AG04450 (cell line): ENCODE measurements at regions of chr2 and their contacts with region 1.

Region 1: GRCh38 chr2:68282811-68283418 is 30.6 kb upstream of the PPP3R1 start:
- DNase-seq: no peak
- H3K4me3 ChIP-seq: no peak overlapping the region
- H3K27ac ChIP-seq: no peak overlapping the region
- H3K27me3 ChIP-seq: no peaks in the 10 kb centered on the region
- CTCF ChIP-seq: peak; percentile 88

Region 2: GRCh38 chr2:68127358-68128242 is 155.3 kb before region 1 on chr2:
- CTCF ChIA-PET with region 1: interaction called, 70 read pairs
- POLR2A ChIA-PET with region 1: no interaction called
- DNase-seq: no peak
- H3K4me3 ChIP-seq: no peak overlapping the region
- H3K27ac ChIP-seq: no peak overlapping the region
- H3K27me3 ChIP-seq: no peaks in the 10 kb centered on the region
- CTCF ChIP-seq: no peak

Region 3: DNA sequence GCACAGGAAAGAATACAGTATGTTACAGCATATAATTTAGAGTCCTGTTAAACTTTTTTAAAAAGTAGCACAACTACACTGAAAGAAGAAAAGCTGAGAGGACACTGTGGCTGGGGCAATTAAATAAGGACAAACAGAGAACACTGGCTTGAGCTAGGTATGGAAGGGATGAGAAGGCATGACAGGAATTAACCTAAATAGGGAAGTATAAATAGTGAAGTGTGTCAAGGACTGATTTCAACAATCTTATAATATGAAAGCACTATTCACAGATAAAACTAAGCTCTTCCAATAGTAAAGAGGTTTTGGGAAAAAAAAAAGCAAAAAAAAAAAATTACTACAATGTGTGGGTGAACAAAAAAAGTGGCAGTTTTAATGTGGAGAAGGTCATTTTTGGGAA is 76.1 kb before region 1 on chr2:
- CTCF ChIA-PET with region 1: no interaction called
- POLR2A ChIA-PET with region 1: no interaction called
- DNase-seq: no peak
- H3K4me3 ChIP-seq: no peak overlapping the region
- H3K27ac ChIP-seq: no peak overlapping the region
- H3K27me3 ChIP-seq: no peaks in the 10 kb centered on the region
- CTCF ChIP-seq: no peak

Region 4: DNA sequence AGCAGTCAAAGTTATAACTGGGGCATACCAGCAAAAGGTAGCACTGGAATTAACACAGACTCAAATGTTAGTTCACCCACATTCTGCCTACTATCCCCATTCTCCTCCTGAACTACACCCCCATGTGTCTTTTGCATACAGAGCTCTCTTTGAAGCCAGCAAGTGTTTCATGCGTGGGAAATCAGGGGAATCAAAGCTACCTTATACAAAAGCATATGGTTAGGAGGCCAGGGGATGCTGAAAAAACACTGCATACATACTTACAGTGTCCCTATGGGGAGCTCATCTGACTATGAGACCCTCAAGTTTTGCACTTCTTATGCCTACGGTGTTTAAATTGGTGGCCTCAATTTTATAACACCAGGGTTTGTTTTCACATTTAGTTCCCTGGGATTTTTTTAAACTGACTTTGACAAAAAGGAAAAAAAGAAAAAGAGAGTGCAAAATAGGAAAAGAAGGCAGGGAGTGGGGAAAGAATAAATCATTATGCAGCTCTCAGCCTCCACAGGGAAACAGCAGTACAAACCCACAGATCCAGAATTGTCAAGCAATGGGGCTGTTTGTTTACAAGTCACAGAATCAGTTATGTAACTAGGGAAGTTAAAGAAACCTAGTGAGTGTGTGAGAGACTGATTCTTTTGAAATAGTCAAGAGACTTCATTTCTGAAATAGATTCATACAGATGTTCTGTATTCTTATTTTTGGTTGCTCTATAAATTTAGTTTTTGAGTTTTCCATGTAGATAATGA is 10.5 kb before region 1 on chr2:
- CTCF ChIA-PET with region 1: interaction called, 12 read pairs
- POLR2A ChIA-PET with region 1: interaction called, 5 read pairs
- DNase-seq: no peak
- H3K4me3 ChIP-seq: no peak overlapping the region
- H3K27ac ChIP-seq: no peak overlapping the region
- H3K27me3 ChIP-seq: no peaks in the 10 kb centered on the region
- CTCF ChIP-seq: no peak

Region 5: DNA sequence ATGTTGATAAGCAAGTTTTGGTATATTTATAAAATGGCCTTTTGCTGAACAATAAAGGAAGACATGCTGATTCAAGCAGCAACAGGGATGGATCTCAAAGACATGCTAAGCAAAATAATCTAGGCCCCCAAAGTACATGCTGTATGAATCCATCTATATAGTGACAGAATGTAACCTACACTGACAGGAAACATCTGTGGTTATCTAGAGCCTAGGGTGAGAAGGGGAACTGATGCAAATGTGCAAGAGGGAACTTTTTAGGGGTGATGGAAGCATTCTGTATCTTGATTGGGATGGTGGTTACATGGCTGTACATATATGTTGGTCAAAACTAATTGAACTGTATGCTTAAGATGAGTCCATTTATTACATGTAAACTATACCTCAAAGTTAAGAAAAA is 12.6 kb after region 1 on chr2:
- CTCF ChIA-PET with region 1: interaction called, 14 read pairs
- POLR2A ChIA-PET with region 1: interaction called, 3 read pairs
- DNase-seq: no peak
- H3K4me3 ChIP-seq: no peak overlapping the region
- H3K27ac ChIP-seq: no peak overlapping the region
- H3K27me3 ChIP-seq: no peaks in the 10 kb centered on the region
- CTCF ChIP-seq: no peak

Region 6: GRCh38 chr2:68325056-68325455 is 42.1 kb after region 1 on chr2:
- CTCF ChIA-PET with region 1: no interaction called
- POLR2A ChIA-PET with region 1: no interaction called
- DNase-seq: no peak
- H3K4me3 ChIP-seq: no peak overlapping the region
- H3K27ac ChIP-seq: no peak overlapping the region
- H3K27me3 ChIP-seq: no peaks in the 10 kb centered on the region
- CTCF ChIP-seq: no peak